GM13976 (cell line): ENCODE measurements at regions of chr5 and their contacts with region 1.

Region 1: GRCh38 chr5:170225326-170226128 is 7.3 kb upstream of the C5orf58 start:
- DNase-seq: peak; percentile 71
- CTCF ChIP-seq: peak; percentile 75

Region 2: GRCh38 chr5:169826618-169827017 is 398.9 kb before region 1 on chr5:
- in situ Hi-C with region 1: no loop called
- DNase-seq: no peak
- CTCF ChIP-seq: no peak

Region 3: GRCh38 chr5:170411100-170411499 is 185.6 kb after region 1 on chr5:
- in situ Hi-C with region 1: loop called (anchors 10 kb)
- DNase-seq: peak; percentile 49
- CTCF ChIP-seq: peak; percentile 20